Esophagus muscularis mucosa (tissue), 4 donors: ENCODE measurements at regions of chr22 and their contacts with region 1.

Region 1: GRCh38 chr22:43993027-43993760 is 30.9 kb upstream of the PARVB start:
- DNase-seq: no peak
- H3K4me3 ChIP-seq: no peak overlapping the region
- H3K27ac ChIP-seq: no peak overlapping the region
- H3K4me1 ChIP-seq: peaks cover 0 to 18% (median 2%) of the 10 kb centered on the region in 4 donors
- H3K27me3 ChIP-seq: no peaks in the 10 kb centered on the region
- CTCF ChIP-seq: peak; percentile 92 to 97 (median 93)
- EP300 ChIP-seq: no peak
- POLR2A ChIP-seq: no peak

Region 2: DNA sequence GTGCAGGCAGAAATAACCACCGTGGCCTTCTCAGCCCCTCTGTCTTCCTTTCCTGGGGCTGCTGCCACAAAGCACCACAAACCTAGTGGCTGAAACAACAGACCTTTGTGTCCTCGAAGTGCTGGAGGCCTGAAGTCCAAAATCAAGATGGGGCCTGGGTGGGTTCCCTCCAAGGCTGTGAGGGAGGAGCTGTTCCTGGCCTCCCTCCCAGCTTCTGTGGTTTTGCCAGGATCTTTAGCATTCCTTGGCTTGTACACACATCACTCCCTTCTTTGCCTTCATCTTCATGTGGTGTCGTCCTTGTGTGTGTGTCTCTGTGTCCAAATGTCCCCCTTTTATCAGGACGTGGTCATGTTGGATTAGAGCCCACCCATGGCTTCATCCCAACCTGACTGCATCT is 158.5 kb after region 1 on chr22:
- intact Hi-C with region 1: loop called (anchors 10 kb)
- DNase-seq: no peak
- H3K4me3 ChIP-seq: no peak overlapping the region
- H3K27ac ChIP-seq: no peak overlapping the region
- H3K4me1 ChIP-seq: peaks cover 0 to 22% (median 15%) of the 10 kb centered on the region in 4 donors
- H3K27me3 ChIP-seq: no peaks in the 10 kb centered on the region
- CTCF ChIP-seq: no peak
- EP300 ChIP-seq: no peak
- POLR2A ChIP-seq: no peak

Region 3: GRCh38 chr22:44337678-44338004 is 344.4 kb after region 1 on chr22:
- intact Hi-C with region 1: loop called (anchors 10 kb)
- DNase-seq: no peak
- H3K4me3 ChIP-seq: no peak overlapping the region
- H3K27ac ChIP-seq: peak overlapping the region in 1 of 4 donors; percentile 6
- H3K4me1 ChIP-seq: peaks cover 9 to 41% (median 32%) of the 10 kb centered on the region in 4 donors
- H3K27me3 ChIP-seq: peaks cover 0 to 10% (median 0%) of the 10 kb centered on the region in 4 donors
- CTCF ChIP-seq: no peak
- EP300 ChIP-seq: no peak
- POLR2A ChIP-seq: no peak

Region 4: DNA sequence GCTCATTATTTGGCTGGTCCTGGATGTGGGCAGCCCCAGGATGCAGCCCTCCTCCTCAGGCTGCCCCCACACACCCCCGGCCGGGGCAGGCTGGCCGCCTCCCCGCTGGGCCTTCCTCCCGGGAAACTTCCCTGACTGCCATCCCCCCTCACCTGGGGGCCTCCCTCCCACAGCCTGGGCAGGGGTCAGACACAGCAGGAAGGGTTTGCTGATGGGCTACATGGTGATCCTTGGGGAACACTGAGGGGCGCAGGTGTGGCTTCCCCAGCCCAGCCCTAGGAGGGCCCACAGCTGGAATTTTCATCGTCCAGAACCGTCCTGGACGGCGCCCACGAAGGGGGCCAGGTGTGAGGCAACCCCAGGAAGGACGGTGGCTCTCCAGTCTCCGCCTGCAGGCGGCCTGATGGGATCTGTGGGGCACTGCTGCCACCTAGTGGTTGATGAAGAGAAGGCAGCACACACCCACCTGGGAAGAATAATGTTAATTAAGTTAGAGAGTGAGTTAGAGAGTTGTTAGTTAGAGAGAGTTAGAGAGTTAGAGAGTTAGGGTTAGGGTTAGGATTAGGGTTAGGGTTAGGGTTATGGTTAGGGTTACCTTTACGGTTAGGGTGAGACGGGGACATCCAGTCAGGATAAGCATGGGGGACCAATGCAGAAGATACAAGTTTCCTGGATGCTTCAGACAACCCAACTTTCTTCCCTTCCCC is 632.9 kb after region 1 on chr22:
- intact Hi-C with region 1: loop called (anchors 1 kb)
- DNase-seq: no peak
- H3K4me3 ChIP-seq: no peak overlapping the region
- H3K27ac ChIP-seq: no peak overlapping the region
- H3K4me1 ChIP-seq: peaks cover 0 to 5% (median 2%) of the 10 kb centered on the region in 4 donors
- H3K27me3 ChIP-seq: peaks cover 0 to 59% (median 3%) of the 10 kb centered on the region in 4 donors
- CTCF ChIP-seq: peak; percentile 97 to 99 (median 98)
- EP300 ChIP-seq: no peak
- POLR2A ChIP-seq: no peak